ENCODE measurements at regions of chr7 and their contacts with region 1.

Region 1: DNA sequence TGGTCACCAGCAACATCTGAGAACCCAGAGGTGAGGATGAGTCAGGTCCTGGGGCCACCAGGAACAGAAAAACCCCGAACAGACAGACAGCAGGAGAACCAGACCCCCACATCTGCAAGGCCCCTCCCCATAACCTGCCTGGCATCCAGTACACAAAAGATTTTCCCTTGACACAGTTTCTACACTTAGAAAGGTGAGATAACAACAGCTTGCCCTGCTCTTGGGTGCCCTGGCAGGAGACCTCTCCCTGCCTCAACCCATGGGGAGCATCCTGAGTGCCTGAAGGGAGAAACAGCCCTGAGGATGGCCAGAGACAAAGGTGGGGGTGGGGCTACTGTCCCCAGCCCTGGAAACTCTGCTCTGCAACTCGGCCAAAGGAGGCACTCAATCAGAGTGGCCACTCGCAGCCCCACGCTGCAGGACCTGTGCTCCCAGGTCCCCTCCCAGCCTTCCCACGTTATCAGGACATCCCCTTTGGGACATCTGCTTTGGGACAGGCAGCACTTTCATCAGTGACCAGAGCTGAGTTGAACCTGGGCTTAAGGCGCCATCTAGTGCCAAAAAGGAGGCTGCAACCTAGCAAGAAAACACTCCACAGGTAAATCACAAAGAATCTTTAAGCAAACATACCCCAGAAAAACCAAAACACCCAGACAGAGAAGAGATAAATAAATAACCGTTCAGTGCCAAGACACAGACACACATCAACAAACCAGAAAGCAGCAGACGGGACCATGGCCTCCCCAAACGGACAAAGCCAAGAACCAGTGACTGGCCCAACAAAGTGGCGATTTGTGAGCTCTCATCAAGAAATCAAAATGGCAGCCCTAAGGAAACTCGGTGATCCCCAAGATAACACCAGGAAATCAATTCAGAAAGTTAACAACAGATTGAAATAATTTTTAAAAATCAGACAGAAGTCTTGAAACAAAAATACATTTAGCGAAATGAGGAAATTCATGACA is 233.7 kb downstream of the PTPRN2 start:
- DNase-seq: peak; percentile 22
- ATAC-seq: peak; percentile 82
- H3K4me3 ChIP-seq: no peak overlapping the region
- H3K27ac ChIP-seq: no peak overlapping the region
- H3K4me1 ChIP-seq: no peaks in the 10 kb centered on the region
- H3K27me3 ChIP-seq: no peaks in the 10 kb centered on the region
- CTCF ChIP-seq: peak; percentile 64 to 82 (median 82)
- POLR2A ChIP-seq: no peak
- RAD21 ChIP-seq: peak; percentile 88

Region 2: DNA sequence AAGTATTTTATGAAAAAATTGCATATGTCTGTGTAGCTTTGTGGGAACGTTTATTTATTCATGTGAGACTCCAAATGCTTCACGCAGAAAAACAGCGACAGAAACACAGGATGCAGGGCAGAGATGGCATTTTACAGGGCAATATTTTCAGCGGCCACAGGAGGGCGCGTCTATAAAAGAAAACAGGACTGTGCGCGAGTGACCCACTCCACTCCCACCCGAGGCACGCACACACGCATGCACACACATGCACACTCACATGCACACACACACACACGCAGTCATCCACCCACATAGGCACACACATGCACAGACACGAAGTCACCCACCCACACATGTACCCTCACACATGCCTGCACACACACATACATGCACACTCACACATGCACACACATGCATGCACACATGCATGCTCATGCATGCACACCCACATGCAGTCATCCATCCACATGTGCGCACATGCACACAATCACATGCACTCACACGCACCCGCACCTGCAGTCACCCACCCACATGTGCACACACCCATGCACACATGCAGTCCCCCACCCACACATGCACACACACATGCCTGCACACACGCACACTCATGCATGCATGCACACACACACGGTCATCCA is 920.8 kb before region 1 on chr7:
- CTCF ChIA-PET with region 1: interaction called, 4 read pairs
- POLR2A ChIA-PET with region 1: no interaction called
- RAD21 ChIA-PET with region 1: no interaction called
- intact Hi-C with region 1: loop called (anchors 5 kb)
- DNase-seq: no peak
- ATAC-seq: peak; percentile 78
- H3K4me3 ChIP-seq: peak overlapping the region; percentile 0 to 17; a peak in 1 of 4 replicates
- H3K27ac ChIP-seq: no peak overlapping the region
- H3K4me1 ChIP-seq: peaks cover 6 to 11% of the 10 kb centered on the region in 2 experiments; a peak in 3 of 4 replicates
- H3K27me3 ChIP-seq: no peaks in the 10 kb centered on the region
- CTCF ChIP-seq: peak; percentile 72 to 80 (median 75)
- POLR2A ChIP-seq: no peak
- RAD21 ChIP-seq: peak; percentile 89

Region 3: GRCh38 chr7:157709531-157710251 is 644.2 kb before region 1 on chr7:
- CTCF ChIA-PET with region 1: no interaction called
- POLR2A ChIA-PET with region 1: no interaction called
- RAD21 ChIA-PET with region 1: no interaction called
- intact Hi-C with region 1: no loop called
- DNase-seq: no peak
- ATAC-seq: no peak
- H3K4me3 ChIP-seq: no peak overlapping the region
- H3K27ac ChIP-seq: no peak overlapping the region
- H3K4me1 ChIP-seq: no peaks in the 10 kb centered on the region
- H3K27me3 ChIP-seq: peaks cover 32% of the 10 kb centered on the region
- CTCF ChIP-seq: no peak
- POLR2A ChIP-seq: no peak
- RAD21 ChIP-seq: no peak

Region 4: DNA sequence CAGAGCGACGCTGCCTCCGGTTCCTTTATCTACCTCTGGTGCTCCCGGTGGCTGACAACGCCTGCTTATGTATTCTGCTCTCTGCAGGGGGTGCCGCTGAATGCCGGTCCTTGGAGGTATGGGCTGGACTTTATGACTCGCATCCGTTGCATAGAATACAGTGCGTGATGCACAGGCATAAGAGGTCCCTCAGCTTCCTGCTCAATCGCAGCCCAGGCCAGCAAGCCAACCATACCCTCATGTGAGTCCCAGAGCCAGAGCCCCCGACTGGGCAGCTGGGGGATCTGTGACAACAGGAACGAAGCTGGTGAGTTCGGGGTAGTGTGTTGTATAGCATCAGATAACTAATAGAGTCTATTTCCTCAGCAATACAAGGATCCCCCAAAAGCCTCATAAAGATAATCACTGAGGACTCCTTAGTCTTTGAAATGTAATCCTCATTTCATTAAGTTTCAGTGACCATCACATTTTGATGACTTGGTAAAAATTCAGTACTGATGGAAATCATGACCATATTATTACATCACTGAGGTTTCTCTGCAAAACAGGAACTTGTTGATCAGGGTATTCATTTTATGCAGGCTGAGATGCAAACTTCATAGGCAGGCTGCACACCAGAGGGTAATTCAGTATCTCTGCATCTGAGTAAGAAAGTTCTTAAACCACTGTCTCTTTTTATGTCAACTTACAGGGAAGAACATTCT is 374.1 kb before region 1 on chr7:
- CTCF ChIA-PET with region 1: no interaction called
- POLR2A ChIA-PET with region 1: no interaction called
- RAD21 ChIA-PET with region 1: no interaction called
- intact Hi-C with region 1: loop called (anchors 10 kb)
- DNase-seq: no peak
- ATAC-seq: no peak
- H3K4me3 ChIP-seq: no peak overlapping the region
- H3K27ac ChIP-seq: no peak overlapping the region
- H3K4me1 ChIP-seq: no peaks in the 10 kb centered on the region
- H3K27me3 ChIP-seq: no peaks in the 10 kb centered on the region
- CTCF ChIP-seq: no peak
- POLR2A ChIP-seq: no peak
- RAD21 ChIP-seq: no peak

Region 5: DNA sequence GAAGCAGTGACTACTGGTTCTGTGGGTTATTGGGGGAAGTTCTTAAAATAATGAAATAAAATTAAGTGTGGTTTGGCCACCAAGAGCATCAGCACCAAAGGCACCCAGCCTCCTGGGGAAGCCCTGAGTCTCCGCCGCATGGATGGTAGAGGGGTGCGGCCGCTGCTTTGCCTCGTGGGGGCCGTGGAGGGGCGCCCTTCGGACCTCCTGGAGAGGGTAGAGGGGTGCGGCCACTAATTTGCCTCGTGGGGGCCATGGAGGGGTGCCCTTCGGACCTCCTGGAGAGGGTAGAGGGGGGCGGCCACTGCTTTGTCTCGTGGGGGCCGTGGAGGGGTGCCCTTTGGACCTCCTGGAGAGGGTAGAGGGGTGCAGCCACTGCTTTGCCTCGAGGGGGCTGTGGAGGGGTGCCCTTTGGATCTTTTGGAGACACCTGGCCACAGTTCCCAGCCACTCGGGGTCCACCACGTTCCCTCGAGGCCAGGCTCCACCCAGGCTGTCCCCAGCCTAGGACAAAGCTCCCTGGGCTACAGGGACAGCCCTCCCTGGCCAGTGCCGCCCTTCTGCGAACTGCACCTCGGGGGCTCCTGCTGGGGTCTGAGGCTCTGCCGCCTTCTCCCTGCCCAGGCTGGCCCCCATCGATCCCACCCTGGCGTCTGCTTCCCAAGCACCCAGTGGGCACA is 301.4 kb before region 1 on chr7:
- CTCF ChIA-PET with region 1: no interaction called
- POLR2A ChIA-PET with region 1: no interaction called
- RAD21 ChIA-PET with region 1: no interaction called
- intact Hi-C with region 1: loop called (anchors 1 kb)
- DNase-seq: no peak
- ATAC-seq: no peak
- H3K4me3 ChIP-seq: no peak overlapping the region
- H3K27ac ChIP-seq: no peak overlapping the region
- H3K4me1 ChIP-seq: no peaks in the 10 kb centered on the region
- H3K27me3 ChIP-seq: no peaks in the 10 kb centered on the region
- CTCF ChIP-seq: no peak
- POLR2A ChIP-seq: no peak
- RAD21 ChIP-seq: no peak

Region 6: DNA sequence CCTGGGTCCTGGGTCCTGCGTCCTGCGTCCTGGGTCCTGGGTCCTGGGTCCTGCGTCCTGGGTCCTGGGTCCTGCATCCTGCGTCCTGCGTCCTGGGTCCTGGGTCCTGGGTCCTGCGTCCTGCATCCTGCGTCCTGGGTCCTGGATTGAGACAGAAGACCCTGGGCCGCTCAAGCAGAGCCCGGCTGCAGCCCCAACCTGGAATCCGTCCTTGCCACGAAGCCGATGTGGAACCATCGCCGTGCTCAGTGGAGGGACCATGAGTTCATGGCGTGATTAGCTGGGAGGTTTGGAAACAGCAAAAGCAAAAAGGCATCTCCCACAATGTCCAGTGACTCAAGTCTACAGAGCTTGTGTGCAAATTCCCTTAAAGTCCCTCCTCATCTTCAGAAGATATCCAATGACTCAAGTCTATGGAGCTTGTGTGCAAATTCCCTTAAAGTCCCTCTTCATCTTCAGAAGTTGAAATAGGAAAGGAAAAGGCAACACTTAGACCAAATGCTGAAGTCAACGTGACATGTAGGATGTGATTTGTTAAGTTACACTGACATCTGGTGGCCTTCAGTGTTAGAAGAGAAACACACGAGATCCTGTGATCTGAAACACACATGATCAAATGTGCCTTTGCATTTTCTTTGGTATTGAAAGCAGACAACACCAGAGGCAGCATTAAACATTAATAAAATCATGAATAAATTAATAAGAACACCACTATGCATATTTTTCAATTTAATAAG is 53.9 kb after region 1 on chr7:
- CTCF ChIA-PET with region 1: no interaction called
- POLR2A ChIA-PET with region 1: no interaction called
- RAD21 ChIA-PET with region 1: no interaction called
- intact Hi-C with region 1: loop called (anchors 1 kb)
- DNase-seq: peak; percentile 48
- ATAC-seq: peak; percentile 73
- H3K4me3 ChIP-seq: no peak overlapping the region
- H3K27ac ChIP-seq: no peak overlapping the region
- H3K4me1 ChIP-seq: no peaks in the 10 kb centered on the region
- H3K27me3 ChIP-seq: no peaks in the 10 kb centered on the region
- CTCF ChIP-seq: peak; percentile 37 to 64 (median 44); a peak in 4 of 6 replicates
- POLR2A ChIP-seq: no peak
- RAD21 ChIP-seq: peak; percentile 77

Region 7: DNA sequence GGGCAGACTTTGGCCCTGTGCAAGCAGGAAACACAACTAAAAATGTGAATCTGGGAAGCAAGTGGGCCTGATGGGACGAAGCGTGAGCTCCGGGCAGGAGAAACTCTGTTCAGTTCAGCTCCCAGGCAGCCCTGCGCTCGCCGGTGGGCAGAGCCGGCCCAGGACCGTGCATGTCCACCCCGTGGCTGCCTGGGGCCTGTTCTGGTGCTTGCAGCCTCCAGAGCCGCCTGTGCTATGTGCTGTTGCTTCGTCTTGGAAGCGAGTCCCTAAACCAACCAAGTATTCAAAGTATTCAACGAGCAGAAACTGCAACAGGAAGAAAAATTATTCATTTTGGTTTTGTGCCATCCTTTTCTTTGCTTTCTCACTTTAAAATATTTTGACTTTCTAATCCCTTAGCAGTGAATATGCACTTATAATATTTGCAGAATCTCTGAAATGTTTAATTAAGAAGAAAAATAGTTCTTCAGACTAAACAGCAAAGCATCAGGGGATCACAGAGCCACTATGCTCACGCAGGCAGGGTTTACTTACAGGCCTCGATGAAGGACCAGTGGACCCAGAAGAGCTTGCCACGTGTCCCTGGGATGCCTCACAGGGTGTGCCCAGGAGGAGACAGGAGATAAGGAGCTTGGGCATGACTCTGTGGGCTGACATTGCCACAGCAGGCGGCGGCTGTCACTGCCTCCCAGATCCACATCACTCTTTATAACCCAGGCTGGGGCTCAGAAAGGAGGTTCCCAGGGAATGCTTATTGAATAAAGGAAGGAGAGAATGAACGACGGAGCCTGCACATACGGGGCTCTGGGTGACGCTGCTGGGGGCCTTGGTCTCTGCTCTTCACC is 745.1 kb after region 1 on chr7:
- CTCF ChIA-PET with region 1: no interaction called
- POLR2A ChIA-PET with region 1: no interaction called
- RAD21 ChIA-PET with region 1: no interaction called
- intact Hi-C with region 1: no loop called
- DNase-seq: no peak
- ATAC-seq: no peak
- H3K4me3 ChIP-seq: no peak overlapping the region
- H3K27ac ChIP-seq: no peak overlapping the region
- H3K4me1 ChIP-seq: no peaks in the 10 kb centered on the region
- H3K27me3 ChIP-seq: no peaks in the 10 kb centered on the region
- CTCF ChIP-seq: no peak
- POLR2A ChIP-seq: no peak
- RAD21 ChIP-seq: no peak